ENCODE measurements at regions of chr10 and their contacts with region 1.

Region 1: DNA sequence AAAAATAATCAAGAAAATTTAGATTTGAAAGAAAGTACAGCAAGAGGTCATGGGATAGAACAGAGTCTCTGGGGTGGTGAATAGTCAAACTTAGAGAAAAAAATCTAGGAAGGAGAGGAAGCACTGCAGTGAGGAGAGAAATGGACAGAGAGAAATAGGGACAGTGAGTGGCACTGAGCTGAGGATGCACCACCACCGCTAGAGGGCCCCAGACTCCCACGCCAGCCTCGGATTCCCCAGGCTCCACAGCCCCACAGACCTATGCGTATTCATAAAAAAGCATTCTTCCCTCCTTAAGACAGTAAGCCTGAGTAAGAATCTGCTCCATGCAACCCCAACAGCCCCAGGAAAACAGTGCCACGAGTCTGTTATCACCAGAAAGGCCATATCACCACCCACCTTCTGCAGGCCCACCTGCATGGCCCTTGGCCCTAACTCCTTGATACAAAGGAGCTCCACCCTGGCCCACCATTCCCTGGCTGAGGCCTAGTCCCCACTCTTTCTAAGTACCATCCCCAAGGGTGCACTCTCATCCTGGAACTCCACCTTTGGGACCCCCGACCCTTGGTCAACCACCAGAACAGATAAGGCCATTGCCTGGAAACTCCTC is 91.0 kb downstream of the ALOX5 start:
- DNase-seq: peak; percentile 87
- ATAC-seq: peak; percentile 96
- H3K4me3 Mint-ChIP-seq: no peak overlapping the region
- H3K27ac Mint-ChIP-seq: peak overlapping the region; percentile 8
- H3K4me1 Mint-ChIP-seq: peaks cover 56% of the 10 kb centered on the region
- H3K27me3 Mint-ChIP-seq: no peaks in the 10 kb centered on the region

Region 2: GRCh38 chr10:45015590-45015989 is 449.5 kb before region 1 on chr10:
- CTCF ChIA-PET with region 1: no interaction called
- POLR2A ChIA-PET with region 1: no interaction called
- DNase-seq: no peak
- ATAC-seq: no peak
- H3K4me3 Mint-ChIP-seq: no peak overlapping the region
- H3K27ac Mint-ChIP-seq: no peak overlapping the region
- H3K4me1 Mint-ChIP-seq: no peaks in the 10 kb centered on the region
- H3K27me3 Mint-ChIP-seq: peaks cover 5% of the 10 kb centered on the region

Region 3: DNA sequence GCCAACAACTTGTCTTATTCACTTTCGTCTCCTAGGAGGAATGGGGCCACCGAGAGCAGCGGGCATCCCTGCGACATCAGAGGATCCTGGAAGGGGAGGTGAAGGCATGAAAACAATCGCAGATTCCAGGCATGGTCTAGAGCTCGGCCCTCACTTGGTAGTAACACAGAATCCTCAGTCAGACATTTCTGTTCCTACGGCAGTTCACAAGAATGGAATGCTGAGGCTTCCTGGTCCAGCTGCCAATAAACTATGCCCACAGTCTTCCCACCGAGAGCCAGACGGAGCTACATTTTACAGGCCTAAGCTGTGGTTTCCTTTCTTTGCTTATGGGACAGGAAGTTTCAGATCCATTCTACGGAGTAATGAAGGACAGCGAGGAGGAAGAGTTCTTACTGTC is 225.4 kb before region 1 on chr10:
- CTCF ChIA-PET with region 1: interaction called, 11 read pairs
- POLR2A ChIA-PET with region 1: no interaction called
- DNase-seq: no peak
- ATAC-seq: no peak
- H3K4me3 Mint-ChIP-seq: no peak overlapping the region
- H3K27ac Mint-ChIP-seq: no peak overlapping the region
- H3K4me1 Mint-ChIP-seq: peaks cover 43% of the 10 kb centered on the region
- H3K27me3 Mint-ChIP-seq: peaks cover 2% of the 10 kb centered on the region

Region 4: DNA sequence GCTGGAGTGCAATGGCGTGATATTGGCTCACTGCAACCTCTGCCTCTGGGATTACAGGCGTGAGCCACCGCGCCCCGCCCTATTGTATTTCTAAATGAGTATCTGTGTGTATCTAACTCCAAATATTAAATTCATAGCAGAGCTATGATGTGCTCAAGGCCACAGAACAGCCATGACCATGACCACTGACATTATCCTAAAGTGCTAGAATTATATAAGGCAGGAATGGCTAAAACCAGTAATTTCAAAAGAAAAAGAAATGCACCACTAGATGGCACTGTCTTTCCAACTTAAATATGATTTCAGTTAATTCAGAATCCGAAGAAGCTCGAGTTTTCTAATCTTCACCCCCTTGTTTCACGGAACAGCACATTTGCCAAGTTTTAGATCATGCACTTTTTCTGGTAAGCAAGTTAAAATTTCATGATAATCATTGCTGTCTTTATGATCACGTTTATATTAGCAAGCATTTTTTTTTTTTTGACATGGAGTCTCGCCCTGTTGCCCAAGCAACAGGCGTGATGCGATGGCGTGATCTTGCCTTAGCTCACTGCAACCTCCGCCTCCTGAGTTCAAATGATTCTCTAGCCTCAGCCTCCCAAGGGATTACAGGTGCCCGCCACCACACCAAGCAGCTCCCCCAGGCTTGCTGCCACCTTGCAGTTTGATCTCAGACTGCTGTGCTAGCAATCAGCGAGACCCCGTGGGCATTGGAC is 214.9 kb before region 1 on chr10:
- CTCF ChIA-PET with region 1: interaction called, 18 read pairs
- POLR2A ChIA-PET with region 1: no interaction called
- DNase-seq: no peak
- ATAC-seq: peak; percentile 65
- H3K4me3 Mint-ChIP-seq: peak overlapping the region; percentile 41
- H3K27ac Mint-ChIP-seq: no peak overlapping the region
- H3K4me1 Mint-ChIP-seq: peaks cover 13% of the 10 kb centered on the region
- H3K27me3 Mint-ChIP-seq: peaks cover 8% of the 10 kb centered on the region

Region 5: GRCh38 chr10:45420453-45421192 is 44.4 kb before region 1 on chr10:
- CTCF ChIA-PET with region 1: interaction called, 17 read pairs
- POLR2A ChIA-PET with region 1: interaction called, 5 read pairs
- DNase-seq: peak; percentile 82
- ATAC-seq: peak; percentile 50
- H3K4me3 Mint-ChIP-seq: peak overlapping the region; percentile 99
- H3K27ac Mint-ChIP-seq: peak overlapping the region; percentile 99
- H3K4me1 Mint-ChIP-seq: peaks cover 84% of the 10 kb centered on the region
- H3K27me3 Mint-ChIP-seq: peaks cover 4% of the 10 kb centered on the region

Region 6: DNA sequence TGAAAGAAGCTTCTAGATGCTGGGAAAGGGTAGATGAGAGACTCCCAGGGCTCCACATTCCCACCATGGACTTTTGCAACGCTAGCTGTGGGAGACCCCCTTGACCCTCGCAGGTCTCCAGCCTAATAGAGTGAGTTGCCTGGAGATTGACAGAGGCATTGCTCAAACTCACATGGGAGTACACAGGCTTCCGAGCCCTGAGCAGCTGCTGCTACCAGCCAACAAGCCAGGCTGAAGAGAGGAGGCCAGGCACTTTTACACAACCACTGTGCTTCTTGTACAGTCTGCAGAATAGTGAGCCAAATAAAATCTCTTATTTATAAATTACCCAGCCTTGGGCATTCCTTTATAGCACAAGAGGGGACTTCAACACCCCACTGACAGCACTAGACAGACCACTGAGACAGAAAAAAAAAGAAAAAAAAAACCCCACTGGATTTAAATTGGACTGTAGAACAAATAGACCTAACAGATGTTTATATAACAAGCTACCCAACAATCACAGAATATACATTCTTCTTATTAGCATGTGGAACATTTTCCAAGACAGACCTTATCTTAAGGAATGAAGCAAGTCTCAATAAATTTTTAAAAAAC is 61.3 kb after region 1 on chr10:
- CTCF ChIA-PET with region 1: no interaction called
- POLR2A ChIA-PET with region 1: no interaction called
- DNase-seq: no peak
- ATAC-seq: no peak
- H3K4me3 Mint-ChIP-seq: no peak overlapping the region
- H3K27ac Mint-ChIP-seq: no peak overlapping the region
- H3K4me1 Mint-ChIP-seq: no peaks in the 10 kb centered on the region
- H3K27me3 Mint-ChIP-seq: no peaks in the 10 kb centered on the region

Region 7: GRCh38 chr10:45672181-45673073 is 207.4 kb after region 1 on chr10 and contains the start of gene ZFAND4:
- CTCF ChIA-PET with region 1: interaction called, 32 read pairs
- POLR2A ChIA-PET with region 1: interaction called, 4 read pairs
- DNase-seq: peak; percentile 97
- ATAC-seq: peak; percentile 98
- H3K4me3 Mint-ChIP-seq: peak within 1 kb of the TSS; percentile 85
- H3K27ac Mint-ChIP-seq: peak within 1 kb of the TSS; percentile 89
- H3K4me1 Mint-ChIP-seq: peaks cover 29% of the 10 kb centered on the region
- H3K27me3 Mint-ChIP-seq: no peaks in the 10 kb centered on the region
- total RNA-seq, gene ZFAND4: 23.2 to 23.3 TPM

Region 8: DNA sequence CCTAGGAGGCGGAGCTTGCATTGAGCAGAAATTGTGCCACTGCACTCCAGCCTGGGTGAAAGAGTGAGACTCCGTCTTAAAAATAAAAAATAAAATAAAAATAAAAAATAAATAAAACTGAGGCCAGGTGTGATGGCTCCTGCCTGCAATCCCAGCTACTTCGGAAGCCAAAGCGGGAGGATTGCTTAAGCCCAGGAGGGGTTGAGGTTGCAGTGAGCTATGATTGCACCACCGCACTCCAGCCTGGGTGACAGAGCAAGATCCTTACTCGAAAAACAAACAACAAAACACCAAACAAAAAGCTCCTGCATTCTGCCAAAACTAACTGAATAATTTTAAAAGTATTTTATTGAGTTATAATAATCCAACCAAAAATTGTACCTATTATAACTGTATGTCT is 346.0 kb after region 1 on chr10:
- CTCF ChIA-PET with region 1: no interaction called
- POLR2A ChIA-PET with region 1: no interaction called
- DNase-seq: no peak
- ATAC-seq: no peak
- H3K4me3 Mint-ChIP-seq: no peak overlapping the region
- H3K27ac Mint-ChIP-seq: no peak overlapping the region
- H3K4me1 Mint-ChIP-seq: no peaks in the 10 kb centered on the region
- H3K27me3 Mint-ChIP-seq: peaks cover 6% of the 10 kb centered on the region

Measured in activated CD8-positive, alpha-beta T cell treated with anti-CD3 and anti-CD28 coated beads, Interleukin-2, amount 10 ng/mL, durations not matched to agents 7 days and 5 days (primary cell).